Activated CD4-positive, alpha-beta memory T cell treated with anti-CD3 and anti-CD28 coated beads, Interleukin-2, amount 10 ng/mL, durations not matched to agents 7 days and 5 days (primary cell): ENCODE measurements at regions of chr20 and their contacts with region 1.

Region 1: DNA sequence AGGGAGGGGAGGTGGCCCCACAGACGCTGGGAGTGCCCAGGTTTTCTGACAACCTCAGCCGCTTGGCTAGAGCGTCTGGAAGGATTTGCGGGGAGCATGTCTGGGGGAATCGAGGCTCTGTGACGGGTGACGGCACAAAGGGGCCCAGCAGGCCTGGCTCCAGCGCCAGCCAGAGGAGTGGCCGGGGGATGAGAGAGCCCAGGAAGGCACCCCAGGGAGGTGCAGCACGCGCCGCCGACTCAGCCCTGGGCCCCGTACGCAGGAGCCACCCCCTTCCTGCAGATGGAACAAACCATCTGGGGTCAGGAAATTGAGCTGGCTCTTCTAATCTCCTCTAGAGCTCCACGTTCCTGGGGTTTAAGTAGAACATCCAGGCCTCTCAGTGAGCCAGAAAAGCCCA is 5.9 kb upstream of the SLCO4A1 start:
- DNase-seq: peak; percentile 37
- H3K4me3 Mint-ChIP-seq: no peak overlapping the region
- H3K27ac Mint-ChIP-seq: no peak overlapping the region
- H3K4me1 Mint-ChIP-seq: peaks cover 26% of the 10 kb centered on the region
- H3K27me3 Mint-ChIP-seq: peaks cover 41% of the 10 kb centered on the region

Region 2: GRCh38 chr20:62623488-62624324 is 12.7 kb before region 1 on chr20:
- CTCF ChIA-PET with region 1: interaction called, 4 read pairs
- POLR2A ChIA-PET with region 1: interaction called, 44 read pairs
- DNase-seq: peak; percentile 96
- H3K4me3 Mint-ChIP-seq: peak overlapping the region; percentile 65
- H3K27ac Mint-ChIP-seq: peak overlapping the region; percentile 97
- H3K4me1 Mint-ChIP-seq: peaks cover 48% of the 10 kb centered on the region
- H3K27me3 Mint-ChIP-seq: no peaks in the 10 kb centered on the region